ENCODE measurements at regions of chr12 and their contacts with region 1.

Region 1: DNA sequence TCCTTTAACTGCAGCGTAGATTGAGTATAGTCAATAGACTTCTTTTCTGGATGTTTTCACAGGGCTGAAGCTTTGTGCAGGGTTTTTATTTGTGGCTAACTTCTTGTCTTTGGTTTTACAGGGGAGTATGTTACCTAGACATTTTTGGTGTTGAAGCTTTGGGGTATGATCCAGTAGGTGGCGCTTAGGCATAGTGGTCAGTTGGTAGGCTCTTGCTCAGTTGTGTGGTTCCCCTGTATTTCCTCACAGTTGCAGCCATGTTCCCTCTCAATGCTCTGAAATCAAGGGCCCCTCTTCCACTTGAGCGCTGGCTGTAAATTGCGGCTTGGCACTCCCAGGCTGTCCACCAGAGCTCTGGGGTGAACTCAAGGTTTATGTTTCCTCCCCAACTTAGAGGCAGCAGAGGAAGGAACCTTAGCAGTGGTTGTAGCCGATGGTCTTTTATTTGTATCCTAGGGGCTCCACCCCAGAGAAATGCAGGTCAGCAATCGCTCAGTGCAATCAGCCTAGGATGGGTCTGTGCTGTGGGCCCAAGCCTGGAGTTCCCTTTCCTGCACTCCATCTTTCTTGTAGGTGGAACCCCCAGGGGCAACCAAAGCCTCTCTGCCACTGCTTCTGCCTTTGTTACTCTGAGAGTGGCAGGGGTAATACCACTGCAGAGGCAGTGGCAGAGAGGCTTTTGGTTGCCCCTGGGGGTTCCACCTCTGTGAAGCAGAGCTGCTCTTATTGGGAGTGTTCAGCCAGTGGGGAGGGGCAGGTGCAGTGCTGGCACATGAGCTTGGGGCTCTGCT is 55.1 kb downstream of the CMAS start:
- DNase-seq: peak; percentile 40
- ATAC-seq: peak; percentile 89
- H3K4me3 ChIP-seq: no peak overlapping the region
- H3K27ac ChIP-seq: no peak overlapping the region
- H3K4me1 ChIP-seq: no peaks in the 10 kb centered on the region
- H3K27me3 ChIP-seq: no peaks in the 10 kb centered on the region
- CTCF ChIP-seq: peak; percentile 69
- EP300 ChIP-seq: no peak
- POLR2A ChIP-seq: no peak
- RAD21 ChIP-seq: peak; percentile 55; the same call in 1 of the 2 replicates

Region 2: GRCh38 chr12:22334410-22335290 is 233.5 kb after region 1 on chr12 and contains the start of gene ST8SIA1:
- CTCF ChIA-PET with region 1: interaction called, 5 read pairs
- POLR2A ChIA-PET with region 1: no interaction called
- in situ Hi-C with region 1: loop called (anchors 5 kb)
- intact Hi-C with region 1: loop called (anchors 1 kb)
- DNase-seq: peak; percentile 7
- ATAC-seq: peak; percentile 82
- H3K4me3 ChIP-seq: peak within 1 kb of the TSS; percentile 60 to 68 (median 64); a peak in 5 of 6 replicates
- H3K27ac ChIP-seq: no peak within 1 kb of the TSS
- H3K4me1 ChIP-seq: no peaks in the 10 kb centered on the region
- H3K27me3 ChIP-seq: peaks cover 0 to 24% of the 10 kb centered on the region in 2 experiments; a peak in 3 of 5 replicates
- CTCF ChIP-seq: no peak
- EP300 ChIP-seq: no peak
- POLR2A ChIP-seq: no peak
- RAD21 ChIP-seq: no peak
- total RNA-seq, gene ST8SIA1: not detected in 2 replicates

Measured in HepG2 (cell line).